ENCODE measurements at regions of chr18 and their contacts with region 1.

Region 1: GRCh38 chr18:45066886-45067285 is 386.2 kb downstream of the SETBP1 start:
- DNase-seq: no peak
- ATAC-seq: peak; percentile 50 to 88 (median 65)
- H3K4me3 ChIP-seq: no peak overlapping the region
- H3K27ac ChIP-seq: no peak overlapping the region
- H3K4me1 ChIP-seq: peaks cover 0 to 21% (median 0%) of the 10 kb centered on the region in 4 donors
- H3K27me3 ChIP-seq: no peaks in the 10 kb centered on the region
- CTCF ChIP-seq: no peak
- POLR2A ChIP-seq: no peak

Region 2: GRCh38 chr18:45127405-45127804 is 60.5 kb after region 1 on chr18:
- intact Hi-C with region 1: loop called in 1 of 2 experiments (anchors 5 kb)
- DNase-seq: no peak
- ATAC-seq: no peak
- H3K4me3 ChIP-seq: no peak overlapping the region
- H3K27ac ChIP-seq: no peak overlapping the region
- H3K4me1 ChIP-seq: no peaks in the 10 kb centered on the region
- H3K27me3 ChIP-seq: no peaks in the 10 kb centered on the region
- CTCF ChIP-seq: no peak
- POLR2A ChIP-seq: no peak

Region 3: GRCh38 chr18:45291621-45292615 is 225.0 kb after region 1 on chr18:
- intact Hi-C with region 1: no loop called
- DNase-seq: no peak
- ATAC-seq: no peak
- H3K4me3 ChIP-seq: no peak overlapping the region
- H3K27ac ChIP-seq: no peak overlapping the region
- H3K4me1 ChIP-seq: no peaks in the 10 kb centered on the region
- H3K27me3 ChIP-seq: no peaks in the 10 kb centered on the region
- CTCF ChIP-seq: no peak
- POLR2A ChIP-seq: no peak

Measured in right lobe of liver (tissue), 6 donors.